ENCODE measurements at regions of chr20 and their contacts with region 1.

Region 1: GRCh38 chr20:4082406-4083097 is 67.2 kb upstream of the RNF24 start:
- DNase-seq: peak; percentile 59
- ATAC-seq: peak; percentile 77
- H3K4me3 ChIP-seq: no peak overlapping the region; the same call in 1 of the 2 replicates
- H3K27ac ChIP-seq: peak overlapping the region; percentile 66
- H3K4me1 ChIP-seq: peaks cover 22% of the 10 kb centered on the region
- H3K27me3 ChIP-seq: no peaks in the 10 kb centered on the region; a peak in 1 of 4 replicates
- CTCF ChIP-seq: no peak
- EP300 ChIP-seq: peak in 1 of 2 experiments; percentile 24; a peak in 1 of 4 replicates
- POLR2A ChIP-seq: no peak; the same call in 1 of the 2 replicates
- RAD21 ChIP-seq: no peak

Region 2: DNA sequence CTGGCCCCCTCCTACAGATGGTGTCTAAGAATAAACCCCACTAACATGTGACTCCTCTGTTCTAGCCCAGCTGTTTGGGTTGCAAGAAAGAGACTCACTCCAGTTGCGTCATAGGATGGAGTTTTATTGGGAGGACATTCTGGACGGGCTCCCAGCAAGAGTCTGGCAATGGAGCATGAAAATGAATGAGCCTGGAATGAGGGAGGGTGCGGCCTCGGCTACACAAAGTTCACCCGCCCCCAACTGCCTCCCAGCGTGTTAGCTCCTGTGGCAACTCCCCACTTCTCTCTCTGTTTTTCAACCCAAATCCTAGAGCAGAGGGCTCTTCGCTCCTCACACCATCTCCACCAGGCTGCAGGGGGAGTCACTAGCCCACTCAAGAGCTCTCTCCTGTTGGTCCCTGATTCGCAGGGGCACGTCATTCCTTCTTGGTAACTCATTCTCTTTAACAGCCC is 395.7 kb before region 1 on chr20:
- CTCF ChIA-PET with region 1: no interaction called
- POLR2A ChIA-PET with region 1: no interaction called
- RAD21 ChIA-PET with region 1: no interaction called
- SMC1A ChIA-PET with region 1: no interaction called
- in situ Hi-C with region 1: no loop called
- intact Hi-C with region 1: loop called (anchors 10 kb)
- DNase-seq: no peak
- ATAC-seq: no peak
- H3K4me3 ChIP-seq: no peak overlapping the region
- H3K27ac ChIP-seq: no peak overlapping the region
- H3K4me1 ChIP-seq: no peaks in the 10 kb centered on the region
- H3K27me3 ChIP-seq: peaks cover 0 to 3% of the 10 kb centered on the region in 2 experiments; a peak in 2 of 4 replicates
- CTCF ChIP-seq: no peak
- EP300 ChIP-seq: no peak
- POLR2A ChIP-seq: no peak
- RAD21 ChIP-seq: no peak

Region 3: DNA sequence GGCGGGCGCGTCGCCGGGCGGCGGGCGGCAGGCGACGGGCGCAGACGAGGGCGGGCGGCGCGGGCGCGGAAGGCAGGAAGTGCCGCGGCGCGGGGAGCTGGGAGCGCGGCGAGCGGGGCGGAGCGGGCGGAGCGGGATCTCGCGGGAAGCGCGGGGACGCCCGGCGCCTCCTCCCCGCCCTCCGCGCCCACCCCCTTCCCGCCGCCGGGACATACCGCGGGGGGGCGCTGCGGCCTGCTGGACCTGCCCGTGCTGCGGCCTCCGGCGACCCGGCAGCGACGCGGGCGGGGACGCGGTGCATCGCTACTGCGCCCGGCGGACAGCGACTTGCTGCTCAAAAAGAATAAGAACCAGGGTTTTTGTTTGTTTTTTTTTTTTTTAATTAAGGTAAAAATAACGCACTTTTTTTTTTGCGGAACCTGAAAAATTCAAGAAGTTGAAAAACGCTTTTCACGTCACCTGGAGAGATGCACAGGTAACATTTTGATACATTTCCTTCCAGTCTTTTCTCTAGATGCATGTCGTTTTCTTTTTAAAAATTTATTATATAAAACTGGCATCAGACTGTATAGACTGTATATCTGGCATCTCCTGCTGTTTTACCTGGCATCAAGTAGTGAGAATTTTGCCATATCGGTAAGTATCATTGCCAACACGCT is 295.8 kb before region 1 on chr20 and contains the start of gene CENPB:
- CTCF ChIA-PET with region 1: interaction called, 13 read pairs
- POLR2A ChIA-PET with region 1: no interaction called
- RAD21 ChIA-PET with region 1: interaction called, 3 read pairs
- SMC1A ChIA-PET with region 1: interaction called, 4 read pairs
- in situ Hi-C with region 1: loop called (anchors 5 kb)
- intact Hi-C with region 1: loop called (anchors 5 kb)
- DNase-seq: no peak
- ATAC-seq: peak; percentile 97
- H3K4me3 ChIP-seq: peak within 1 kb of the TSS; percentile 82
- H3K27ac ChIP-seq: peak within 1 kb of the TSS; percentile 50
- H3K4me1 ChIP-seq: peaks cover 17% of the 10 kb centered on the region
- H3K27me3 ChIP-seq: no peaks in the 10 kb centered on the region
- CTCF ChIP-seq: peak; percentile 70 to 86 (median 71)
- EP300 ChIP-seq: no peak
- POLR2A ChIP-seq: 0 out of 2 replicates have a peak, but pooled peaks have one; percentile 54
- RAD21 ChIP-seq: peak; percentile 84
- polyA plus RNA-seq, gene CENPB: 0.16 to 0.29 TPM

Region 4: DNA sequence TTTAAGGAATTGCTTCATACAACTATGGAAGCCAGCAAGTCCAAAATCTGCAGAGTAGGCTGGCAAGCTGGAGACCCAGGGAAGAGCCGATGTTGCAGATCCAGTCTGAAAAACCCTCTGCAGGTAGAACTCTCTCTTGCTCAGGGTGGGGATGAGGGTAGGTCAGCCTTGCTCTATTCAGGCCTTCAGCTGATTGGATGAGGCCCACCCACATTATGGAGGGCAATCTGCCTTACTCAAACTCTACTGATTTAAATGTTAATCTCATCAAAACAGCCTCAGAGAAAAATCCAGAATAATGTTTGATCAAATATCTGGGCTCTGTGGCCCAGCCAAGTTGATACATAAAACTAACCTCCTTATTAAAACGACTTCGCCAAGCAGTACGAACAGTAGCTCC is 37.5 kb before region 1 on chr20:
- CTCF ChIA-PET with region 1: no interaction called
- POLR2A ChIA-PET with region 1: no interaction called
- RAD21 ChIA-PET with region 1: no interaction called
- SMC1A ChIA-PET with region 1: no interaction called
- in situ Hi-C with region 1: no loop called
- intact Hi-C with region 1: no loop called
- DNase-seq: no peak
- ATAC-seq: no peak
- H3K4me3 ChIP-seq: no peak overlapping the region
- H3K27ac ChIP-seq: no peak overlapping the region
- H3K4me1 ChIP-seq: no peaks in the 10 kb centered on the region
- H3K27me3 ChIP-seq: no peaks in the 10 kb centered on the region
- CTCF ChIP-seq: no peak
- EP300 ChIP-seq: no peak
- POLR2A ChIP-seq: no peak
- RAD21 ChIP-seq: no peak